ENCODE measurements at regions of chr3 and their contacts with region 1.

Region 1: GRCh38 chr3:151210676-151211381 is 7.8 kb upstream of the GPR171 start:
- DNase-seq: no peak
- H3K4me3 Mint-ChIP-seq: peak overlapping the region; percentile 60
- H3K27ac Mint-ChIP-seq: peak overlapping the region; percentile 81
- H3K4me1 Mint-ChIP-seq: peaks cover 54% of the 10 kb centered on the region
- H3K27me3 Mint-ChIP-seq: no peaks in the 10 kb centered on the region

Region 2: DNA sequence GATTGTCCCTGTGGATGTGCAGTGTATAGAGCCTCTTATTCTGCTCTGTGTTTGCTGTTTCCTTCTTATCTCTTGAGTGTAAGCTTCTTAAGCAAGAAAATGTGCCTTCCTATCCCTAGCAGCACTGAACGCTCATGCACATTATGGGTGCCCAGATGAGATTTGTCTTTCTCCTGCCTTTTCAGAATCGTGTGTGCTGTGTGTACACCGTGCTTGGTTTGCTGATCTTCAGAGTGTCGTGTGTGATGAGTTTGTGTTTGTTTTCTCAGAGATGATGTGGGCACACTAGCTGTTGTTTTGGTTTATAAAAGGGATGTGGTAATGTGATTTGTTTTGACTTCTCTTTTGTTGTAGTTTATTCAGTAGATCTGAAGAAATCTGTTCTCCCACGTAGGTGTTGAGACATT is 27.6 kb before region 1 on chr3:
- CTCF ChIA-PET with region 1: interaction called, 4 read pairs
- POLR2A ChIA-PET with region 1: interaction called, 13 read pairs
- DNase-seq: peak; percentile 37
- H3K4me3 Mint-ChIP-seq: peak overlapping the region; percentile 53
- H3K27ac Mint-ChIP-seq: peak overlapping the region; percentile 79
- H3K4me1 Mint-ChIP-seq: peaks cover 49% of the 10 kb centered on the region
- H3K27me3 Mint-ChIP-seq: peaks cover 2% of the 10 kb centered on the region

Region 3: DNA sequence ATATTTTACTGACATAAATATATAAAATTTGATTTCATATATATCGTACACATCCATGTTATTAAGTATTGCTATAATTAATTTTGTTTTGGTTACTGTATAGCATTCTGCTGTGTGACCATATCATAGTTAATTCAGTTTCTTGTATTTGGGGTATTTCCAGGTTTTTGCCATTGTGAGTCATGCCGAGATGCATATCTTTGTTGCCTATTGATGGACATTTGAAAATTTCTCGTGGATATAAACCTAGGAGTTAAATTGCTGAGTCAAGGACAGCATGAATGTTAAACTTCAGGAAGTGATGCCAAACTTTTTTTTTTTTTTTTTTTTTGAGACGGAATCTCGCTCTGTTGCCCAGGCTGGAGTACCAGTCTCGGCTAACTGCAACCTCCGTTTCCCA is 25.9 kb after region 1 on chr3:
- CTCF ChIA-PET with region 1: no interaction called
- POLR2A ChIA-PET with region 1: no interaction called
- DNase-seq: no peak
- H3K4me3 Mint-ChIP-seq: no peak overlapping the region
- H3K27ac Mint-ChIP-seq: no peak overlapping the region
- H3K4me1 Mint-ChIP-seq: no peaks in the 10 kb centered on the region
- H3K27me3 Mint-ChIP-seq: peaks cover 1% of the 10 kb centered on the region

Region 4: DNA sequence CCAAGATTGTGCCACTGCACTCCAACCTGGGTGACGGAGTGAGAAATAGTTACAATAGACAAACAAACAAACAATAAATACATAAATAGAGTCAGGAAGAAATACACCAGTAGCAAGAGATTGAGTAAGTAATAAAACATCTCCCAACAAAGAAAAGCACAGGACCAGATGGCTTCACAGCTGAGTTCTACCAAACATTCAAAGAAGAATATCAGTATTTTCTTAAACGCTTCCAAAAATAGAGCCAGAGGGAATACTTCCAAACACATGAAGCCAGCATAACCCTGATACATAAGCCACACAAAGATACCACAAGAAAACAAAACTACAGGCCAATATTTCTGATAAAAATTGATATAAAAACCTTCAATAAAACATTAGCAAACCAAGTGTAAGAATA is 280.7 kb after region 1 on chr3:
- CTCF ChIA-PET with region 1: no interaction called
- POLR2A ChIA-PET with region 1: no interaction called
- DNase-seq: no peak
- H3K4me3 Mint-ChIP-seq: no peak overlapping the region
- H3K27ac Mint-ChIP-seq: no peak overlapping the region
- H3K4me1 Mint-ChIP-seq: no peaks in the 10 kb centered on the region
- H3K27me3 Mint-ChIP-seq: no peaks in the 10 kb centered on the region

Measured in activated CD4-positive, alpha-beta memory T cell treated with anti-CD3 and anti-CD28 coated beads, Interleukin-2, amount 10 ng/mL, durations not matched to agents 7 days and 5 days (primary cell).